ENCODE measurements at regions of chr19 and their contacts with region 1.

Region 1: DNA sequence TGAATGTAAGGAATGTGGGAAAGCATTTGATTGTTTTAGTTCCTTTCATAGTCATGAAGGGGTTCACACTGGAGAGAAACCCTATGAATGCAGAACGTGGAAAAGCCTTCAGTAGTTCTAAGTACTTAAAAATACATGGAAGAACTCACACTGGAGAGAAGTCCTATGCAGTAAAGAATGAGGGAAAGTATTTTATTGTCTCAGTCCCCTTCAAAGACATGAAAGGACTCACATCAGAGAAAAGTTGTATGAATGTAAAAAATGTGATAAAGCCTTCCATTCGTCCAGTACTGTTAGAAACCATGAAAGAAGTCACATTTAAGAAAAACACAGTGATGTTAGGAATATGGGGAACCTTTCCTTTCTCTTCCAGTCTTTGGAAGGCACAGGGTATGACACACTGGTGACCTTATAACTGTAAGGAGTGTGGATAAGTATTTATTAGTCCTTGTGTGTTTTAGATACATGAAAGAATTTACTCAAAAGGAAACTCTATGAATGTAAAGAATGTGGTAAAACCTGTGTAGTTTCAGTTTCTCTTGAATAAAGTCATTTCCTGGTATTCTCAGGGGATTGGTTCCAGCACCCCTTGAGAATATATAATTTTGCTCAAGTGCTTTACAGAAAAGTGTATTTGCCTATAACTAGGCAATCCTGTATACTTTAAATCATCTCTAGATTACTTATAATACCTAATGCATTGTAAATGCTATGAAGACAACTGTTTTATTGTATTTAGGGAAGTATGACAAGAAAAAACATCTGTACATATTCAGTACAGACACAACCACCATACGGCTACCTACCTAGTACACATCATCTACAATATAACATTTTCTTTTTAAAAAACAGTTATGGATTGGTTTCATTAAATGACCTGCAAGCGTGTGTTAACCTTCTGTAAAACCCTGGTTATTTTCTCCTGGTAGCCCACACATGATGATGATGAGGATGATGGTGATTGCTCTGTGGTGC is 52.8 kb downstream of the ZNF823 start:
- DNase-seq: no peak
- H3K4me3 ChIP-seq: no peak overlapping the region
- CTCF ChIP-seq: no peak

Region 2: DNA sequence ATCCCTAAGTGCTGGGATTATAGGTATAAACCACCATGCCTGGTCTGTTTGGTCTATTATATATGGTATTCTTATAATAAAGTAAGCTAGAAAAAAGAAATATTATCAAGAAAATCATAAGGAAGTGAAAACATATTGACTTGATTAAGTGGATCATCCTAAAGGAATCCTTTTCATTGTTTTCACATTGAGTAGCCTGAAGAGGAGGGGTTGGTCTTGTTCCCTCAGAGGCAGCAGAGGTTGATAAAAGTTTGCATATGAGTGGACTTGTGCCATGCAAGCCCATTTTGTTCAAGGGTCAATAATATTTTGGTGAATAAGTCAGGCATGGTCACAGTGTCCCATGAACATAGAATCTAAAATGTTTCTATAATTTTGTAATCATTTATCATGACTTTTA is 36.0 kb before region 1 on chr19:
- in situ Hi-C with region 1: loop called (anchors 5 kb)
- DNase-seq: no peak
- H3K4me3 ChIP-seq: no peak overlapping the region
- CTCF ChIP-seq: no peak

Measured in astrocyte of the cerebellum (primary cell).